ENCODE measurements at regions of chr1 and their contacts with region 1.

Region 1: DNA sequence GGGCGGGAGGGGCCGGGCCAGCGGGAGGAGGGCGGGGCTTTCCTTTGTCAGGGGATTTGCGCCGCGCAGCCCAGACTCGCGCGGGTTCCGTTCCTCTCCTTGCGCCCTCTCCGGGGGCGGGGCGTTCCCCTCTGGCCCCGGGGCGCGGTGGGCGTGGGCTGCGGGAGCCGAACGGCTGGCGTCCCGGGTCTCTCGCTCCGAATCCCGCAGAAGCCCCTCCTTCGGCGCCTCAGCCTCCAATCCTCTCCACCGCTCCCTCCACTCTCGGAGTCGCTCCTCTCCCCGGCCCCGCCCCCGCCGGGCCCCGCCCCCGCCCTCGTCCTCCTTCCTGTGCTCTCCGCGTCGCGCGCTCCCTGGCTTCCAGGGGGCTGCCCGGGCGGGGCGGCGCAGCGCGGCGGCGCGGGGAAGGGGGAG is 82.8 kb upstream of the BMP8A start:
- DNase-seq: peak; percentile 59 to 89 (median 72)
- ATAC-seq: peak; percentile 92
- H3K4me3 ChIP-seq: peak overlapping the region; percentile 54
- H3K4me3 Mint-ChIP-seq: peak overlapping the region in 8 of 10 donors; percentile 81 to 94 (median 90)
- H3K27ac ChIP-seq: peak overlapping the region; percentile 73
- H3K27ac Mint-ChIP-seq: peak overlapping the region in 2 of 9 donors; percentile 59 to 88
- H3K4me1 ChIP-seq: peaks cover 16 to 34% of the 10 kb centered on the region in 2 donors
- H3K4me1 Mint-ChIP-seq: peaks cover 36 to 69% (median 63%) of the 10 kb centered on the region in 7 donors
- H3K27me3 ChIP-seq: no peaks in the 10 kb centered on the region
- H3K27me3 Mint-ChIP-seq: no peaks in the 10 kb centered on the region

Region 2: DNA sequence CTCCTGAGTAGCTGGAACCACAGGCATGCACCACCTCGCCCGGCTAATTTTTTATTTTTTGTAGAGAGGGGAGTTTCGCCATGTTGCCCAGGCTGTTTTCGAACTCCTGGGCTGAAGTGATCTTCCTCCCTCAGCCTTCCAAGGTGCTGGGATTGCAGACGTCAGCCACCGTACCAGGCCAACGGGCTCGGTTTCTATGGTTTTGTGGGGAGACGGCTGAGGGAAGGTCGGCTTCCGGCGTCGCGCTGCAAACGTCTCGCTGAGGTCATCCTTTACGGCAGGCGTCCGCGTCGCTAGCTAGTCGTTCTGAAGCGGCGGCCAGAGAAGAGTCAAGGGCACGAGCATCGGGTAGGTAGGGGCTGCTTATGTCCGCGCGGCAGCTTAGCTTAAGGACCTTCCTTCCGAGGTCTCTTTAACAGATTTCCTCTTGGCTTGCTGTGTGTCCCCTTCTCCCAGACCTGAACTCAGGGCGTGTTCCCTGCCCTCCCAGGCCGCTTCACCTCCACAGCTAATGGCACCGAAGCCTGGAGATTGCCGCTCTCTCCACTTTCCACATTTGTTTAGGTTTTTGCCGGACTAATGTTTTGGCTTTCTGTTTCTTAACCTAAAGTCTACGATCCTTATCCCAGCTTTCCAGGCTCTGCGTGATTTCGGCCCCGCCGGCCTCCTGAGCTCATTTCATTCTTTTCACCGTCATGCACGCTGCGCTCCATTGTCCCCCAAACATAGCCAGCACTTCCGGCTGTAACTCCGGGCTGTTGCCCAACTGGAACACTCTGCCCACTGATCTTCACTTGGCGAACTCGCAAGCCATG is 382.4 kb before region 1 on chr1 and contains the start of gene NDUFS5:
- CTCF ChIA-PET with region 1: no interaction called
- POLR2A ChIA-PET with region 1: no interaction called
- intact Hi-C with region 1: loop called in 1 of 2 experiments (anchors 10 kb)
- DNase-seq: peak; percentile 53 to 84 (median 80)
- ATAC-seq: peak; percentile 96
- H3K4me3 ChIP-seq: peak within 1 kb of the TSS; percentile 93
- H3K4me3 Mint-ChIP-seq: peak within 1 kb of the TSS; percentile 90 to 100 (median 96)
- H3K27ac ChIP-seq: peak within 1 kb of the TSS; percentile 94
- H3K27ac Mint-ChIP-seq: peak within 1 kb of the TSS; percentile 93 to 99 (median 97)
- H3K4me1 ChIP-seq: peaks cover 18% of the 10 kb centered on the region in 2 donors
- H3K4me1 Mint-ChIP-seq: peaks cover 19 to 37% (median 28%) of the 10 kb centered on the region in 7 donors
- H3K27me3 ChIP-seq: no peaks in the 10 kb centered on the region
- H3K27me3 Mint-ChIP-seq: peaks cover 0 to 6% (median 0%) of the 10 kb centered on the region in 5 donors
- total RNA-seq, gene NDUFS5: 95.1 to 128 (median 115) TPM

Region 3: DNA sequence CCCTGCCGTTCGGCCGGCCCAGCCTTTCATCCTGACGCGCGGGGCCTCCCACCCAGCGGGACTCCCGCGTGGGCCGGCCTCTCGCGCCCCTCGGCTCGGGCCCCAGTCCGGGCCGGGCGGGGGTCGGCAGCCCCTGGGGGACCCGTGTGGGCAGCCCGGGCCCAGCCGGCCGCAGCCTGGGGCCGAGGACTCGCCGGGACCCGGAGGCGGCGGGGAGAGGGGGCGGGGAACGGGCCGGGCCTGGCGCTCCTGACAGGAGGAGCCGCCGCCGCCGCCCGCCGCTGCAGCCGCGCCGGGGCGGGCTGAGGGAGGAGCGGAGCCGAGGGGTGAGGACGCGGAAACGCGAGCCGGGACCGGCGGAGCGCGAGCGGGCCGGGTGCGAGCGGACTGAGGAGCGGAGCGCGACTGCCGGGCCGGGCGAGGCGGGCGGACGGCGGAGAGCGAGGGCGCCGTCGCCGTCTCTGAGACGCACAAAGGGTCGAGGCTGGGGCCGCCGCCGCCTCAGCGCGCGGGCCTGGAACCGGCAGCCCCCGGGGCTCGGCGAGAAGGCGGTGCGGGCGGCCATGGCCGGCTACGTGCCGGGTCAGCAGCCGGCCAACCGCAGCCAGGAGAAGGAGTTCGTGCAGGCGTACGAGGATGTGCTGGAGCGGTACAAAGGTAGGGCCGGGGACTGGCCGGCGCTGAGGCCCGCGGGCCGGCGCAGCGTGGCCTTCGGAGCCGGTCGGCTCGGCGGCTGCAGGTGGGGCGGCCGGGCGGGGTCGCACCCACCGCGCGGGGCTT is 303.4 kb before region 1 on chr1:
- CTCF ChIA-PET with region 1: interaction called, 3 read pairs
- POLR2A ChIA-PET with region 1: no interaction called
- intact Hi-C with region 1: loop called (anchors 1 to 2 kb)
- DNase-seq: peak; percentile 34 to 76 (median 50)
- ATAC-seq: peak; percentile 83
- H3K4me3 ChIP-seq: peak overlapping the region; percentile 64
- H3K4me3 Mint-ChIP-seq: peak overlapping the region in 6 of 10 donors; percentile 50 to 88 (median 72)
- H3K27ac ChIP-seq: peak overlapping the region; percentile 0
- H3K27ac Mint-ChIP-seq: no peak overlapping the region
- H3K4me1 ChIP-seq: peaks cover 8 to 14% of the 10 kb centered on the region in 2 donors
- H3K4me1 Mint-ChIP-seq: peaks cover 22 to 38% (median 34%) of the 10 kb centered on the region in 7 donors
- H3K27me3 ChIP-seq: no peaks in the 10 kb centered on the region
- H3K27me3 Mint-ChIP-seq: peaks cover 0 to 10% (median 3%) of the 10 kb centered on the region in 5 donors

Region 4: GRCh38 chr1:39268112-39268581 is 140.5 kb before region 1 on chr1:
- CTCF ChIA-PET with region 1: interaction called, 7 read pairs
- POLR2A ChIA-PET with region 1: no interaction called
- intact Hi-C with region 1: loop called in 1 of 2 experiments (anchors 5 kb)
- DNase-seq: no peak
- ATAC-seq: peak; percentile 57
- H3K4me3 ChIP-seq: no peak overlapping the region
- H3K4me3 Mint-ChIP-seq: peak overlapping the region; percentile 46 to 84 (median 73)
- H3K27ac ChIP-seq: no peak overlapping the region
- H3K27ac Mint-ChIP-seq: peak overlapping the region; percentile 63 to 86 (median 71)
- H3K4me1 ChIP-seq: peaks cover 16 to 21% of the 10 kb centered on the region in 2 donors
- H3K4me1 Mint-ChIP-seq: peaks cover 58 to 88% (median 80%) of the 10 kb centered on the region in 7 donors
- H3K27me3 ChIP-seq: no peaks in the 10 kb centered on the region
- H3K27me3 Mint-ChIP-seq: no peaks in the 10 kb centered on the region

Region 5: GRCh38 chr1:39387452-39387851 is 21.2 kb before region 1 on chr1:
- CTCF ChIA-PET with region 1: interaction called, 12 read pairs
- POLR2A ChIA-PET with region 1: interaction called, 9 read pairs
- intact Hi-C with region 1: no loop called
- DNase-seq: no peak
- ATAC-seq: no peak
- H3K4me3 ChIP-seq: no peak overlapping the region
- H3K4me3 Mint-ChIP-seq: no peak overlapping the region
- H3K27ac ChIP-seq: no peak overlapping the region
- H3K27ac Mint-ChIP-seq: peak overlapping the region in 5 of 9 donors; percentile 7 to 70 (median 35)
- H3K4me1 ChIP-seq: no peaks in the 10 kb centered on the region
- H3K4me1 Mint-ChIP-seq: peaks cover 10 to 31% (median 19%) of the 10 kb centered on the region in 7 donors
- H3K27me3 ChIP-seq: no peaks in the 10 kb centered on the region
- H3K27me3 Mint-ChIP-seq: no peaks in the 10 kb centered on the region

Region 6: GRCh38 chr1:39575191-39576015 is 166.8 kb after region 1 on chr1:
- CTCF ChIA-PET with region 1: no interaction called
- POLR2A ChIA-PET with region 1: no interaction called
- intact Hi-C with region 1: loop called in 1 of 2 experiments (anchors 2 kb)
- DNase-seq: peak; percentile 25 to 72 (median 57)
- ATAC-seq: peak; percentile 45
- H3K4me3 ChIP-seq: peak overlapping the region; percentile 68
- H3K4me3 Mint-ChIP-seq: peak overlapping the region; percentile 86 to 98 (median 91)
- H3K27ac ChIP-seq: peak overlapping the region; percentile 89
- H3K27ac Mint-ChIP-seq: peak overlapping the region; percentile 79 to 96 (median 93)
- H3K4me1 ChIP-seq: peaks cover 18 to 26% of the 10 kb centered on the region in 2 donors
- H3K4me1 Mint-ChIP-seq: peaks cover 19 to 52% (median 49%) of the 10 kb centered on the region in 7 donors
- H3K27me3 ChIP-seq: no peaks in the 10 kb centered on the region
- H3K27me3 Mint-ChIP-seq: no peaks in the 10 kb centered on the region